ENCODE measurements at regions of chr1 and their contacts with region 1.

Region 1: GRCh38 chr1:203026031-203026989 is at the start of gene PPFIA4:
- DNase-seq: peak; percentile 87
- H3K4me3 Mint-ChIP-seq: peak within 1 kb of the TSS; percentile 85
- H3K27ac Mint-ChIP-seq: peak within 1 kb of the TSS; percentile 65
- H3K4me1 Mint-ChIP-seq: peaks cover 25% of the 10 kb centered on the region
- H3K27me3 Mint-ChIP-seq: no peaks in the 10 kb centered on the region
- total RNA-seq, gene PPFIA4: 11.5 and 14.9 TPM in 2 replicates

Region 2: DNA sequence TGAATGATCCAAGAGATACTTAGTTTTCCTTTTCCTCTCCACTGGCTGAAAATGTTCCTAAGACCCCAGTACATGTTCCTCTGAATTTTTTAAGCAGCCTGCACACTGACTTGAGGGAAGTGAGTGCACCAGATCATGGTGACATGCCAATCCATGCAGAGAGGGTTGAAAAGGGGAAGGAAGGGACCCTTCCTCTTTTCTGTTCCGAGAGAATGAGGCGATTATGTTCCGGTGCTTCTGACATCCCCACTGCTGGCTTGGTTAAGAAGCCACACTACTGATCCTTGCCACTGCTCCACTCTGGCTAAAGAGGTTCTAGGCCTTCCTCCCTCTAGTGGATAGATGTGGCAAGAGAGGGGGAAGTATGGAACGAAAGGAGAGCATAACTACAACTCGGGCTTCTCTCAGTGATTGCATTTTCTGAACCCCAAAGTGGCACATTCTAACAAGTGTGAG is 57.4 kb before region 1 on chr1:
- intact Hi-C with region 1: loop called (anchors 1 kb)
- DNase-seq: peak; percentile 20
- H3K4me3 Mint-ChIP-seq: peak overlapping the region; percentile 48
- H3K27ac Mint-ChIP-seq: no peak overlapping the region
- H3K4me1 Mint-ChIP-seq: peaks cover 35% of the 10 kb centered on the region
- H3K27me3 Mint-ChIP-seq: peaks cover 11% of the 10 kb centered on the region

Region 3: GRCh38 chr1:203006948-203007871 is 19.1 kb before region 1 on chr1 and contains the start of gene TMEM183A:
- intact Hi-C with region 1: loop called (anchors 1 kb)
- DNase-seq: peak; percentile 95
- H3K4me3 Mint-ChIP-seq: peak within 1 kb of the TSS; percentile 89
- H3K27ac Mint-ChIP-seq: peak within 1 kb of the TSS; percentile 96
- H3K4me1 Mint-ChIP-seq: peaks cover 34% of the 10 kb centered on the region
- H3K27me3 Mint-ChIP-seq: no peaks in the 10 kb centered on the region
- total RNA-seq, gene TMEM183A: 69.9 and 83.6 TPM in 2 replicates